Aorta (tissue), 5 donors: ENCODE measurements at regions of chr5 and their contacts with region 1.

Region 1: GRCh38 chr5:149581192-149581861 is at the start of gene ARHGEF37:
- DNase-seq: peak; percentile 86 to 95
- ATAC-seq: peak; percentile 87
- H3K4me3 ChIP-seq: peak within 1 kb of the TSS; percentile 18 to 51
- H3K27ac ChIP-seq: peak within 1 kb of the TSS in 1 of 2 donors; percentile 49
- H3K4me1 ChIP-seq: peaks cover 0 to 6% of the 10 kb centered on the region in 2 donors
- H3K27me3 ChIP-seq: no peaks in the 10 kb centered on the region
- total RNA-seq, gene ARHGEF37: 9.7 to 18.0 TPM

Region 2: DNA sequence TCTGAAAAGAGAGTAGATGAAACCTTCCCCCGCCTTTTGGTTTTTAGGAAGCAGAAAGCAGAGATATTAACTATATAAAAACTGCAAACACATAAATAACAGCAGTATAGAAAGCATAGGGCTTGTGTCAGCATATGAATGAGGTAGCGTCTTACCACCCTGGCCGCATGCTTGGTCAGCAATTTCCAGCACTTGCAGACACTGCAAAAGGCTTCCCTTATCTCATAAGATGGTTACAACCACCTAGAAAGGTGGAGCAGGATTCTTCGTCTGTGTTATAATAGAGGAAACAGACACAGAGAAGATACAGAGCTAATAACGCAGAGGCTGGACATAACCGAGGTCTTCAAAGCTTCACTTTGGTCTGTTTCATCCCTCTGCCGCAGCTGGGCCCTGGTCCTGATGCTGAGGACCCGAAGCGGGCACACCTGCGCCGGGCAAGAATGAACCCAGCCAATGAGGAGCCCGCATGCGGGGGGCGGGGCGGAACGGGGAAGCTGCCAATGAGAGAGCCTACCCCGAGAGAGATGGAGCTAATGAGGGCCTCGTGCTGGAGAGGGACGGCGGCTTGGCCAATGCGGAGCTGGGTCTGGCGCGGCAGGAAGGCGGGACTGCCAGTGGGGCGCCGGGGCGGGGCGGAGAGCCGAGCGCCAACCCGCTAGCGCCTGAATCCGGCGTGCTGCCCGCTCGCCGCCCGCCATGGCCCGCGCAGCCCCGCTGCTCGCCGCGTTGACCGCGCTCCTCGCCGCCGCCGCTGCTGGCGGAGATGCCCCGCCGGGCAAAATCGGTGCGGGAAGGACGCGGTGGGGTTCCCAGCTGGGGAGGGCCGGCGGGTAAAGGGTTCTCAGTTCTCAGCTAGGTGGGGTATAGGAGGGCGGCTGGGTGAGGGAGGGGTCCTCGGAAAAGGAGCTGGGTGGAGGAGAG is 223.7 kb before region 1 on chr5 and contains the start of gene PCYOX1L:
- intact Hi-C with region 1: loop called in 1 of 2 experiments (anchors 5 kb)
- DNase-seq: peak; percentile 97 to 98
- ATAC-seq: peak; percentile 98
- H3K4me3 ChIP-seq: peak within 1 kb of the TSS; percentile 49 to 50
- H3K27ac ChIP-seq: no peak within 1 kb of the TSS
- H3K4me1 ChIP-seq: no peaks in the 10 kb centered on the region
- H3K27me3 ChIP-seq: no peaks in the 10 kb centered on the region
- total RNA-seq, gene PCYOX1L: 3.1 to 9.2 TPM

Region 3: GRCh38 chr5:149429839-149430721 is 151.2 kb before region 1 on chr5:
- intact Hi-C with region 1: no loop called
- DNase-seq: peak; percentile 83 to 85
- ATAC-seq: peak; percentile 8
- H3K4me3 ChIP-seq: no peak overlapping the region
- H3K27ac ChIP-seq: peak overlapping the region; percentile 9 to 23
- H3K4me1 ChIP-seq: no peaks in the 10 kb centered on the region
- H3K27me3 ChIP-seq: no peaks in the 10 kb centered on the region

Region 4: GRCh38 chr5:149618581-149619251 is 37.4 kb after region 1 on chr5:
- intact Hi-C with region 1: loop called in 1 of 2 experiments (anchors 2 kb)
- DNase-seq: no peak
- ATAC-seq: peak; percentile 58
- H3K4me3 ChIP-seq: no peak overlapping the region
- H3K27ac ChIP-seq: no peak overlapping the region
- H3K4me1 ChIP-seq: no peaks in the 10 kb centered on the region
- H3K27me3 ChIP-seq: no peaks in the 10 kb centered on the region